ENCODE measurements at regions of chr19 and their contacts with region 1.

Region 1: GRCh38 chr19:54029930-54030490 is 33.7 kb downstream of the VSTM1 start:
- DNase-seq: peak; percentile 70 to 88
- ATAC-seq: peak; percentile 87
- H3K4me3 ChIP-seq: no peak overlapping the region
- H3K27ac ChIP-seq: peak overlapping the region in 1 of 2 experiments; percentile 32; a peak in 2 of 6 replicates
- H3K4me1 ChIP-seq: no peaks in the 10 kb centered on the region
- CTCF ChIP-seq: peak; percentile 91
- EP300 ChIP-seq: no peak
- POLR2A ChIP-seq: no peak
- RAD21 ChIP-seq: peak; percentile 90 to 92

Region 2: DNA sequence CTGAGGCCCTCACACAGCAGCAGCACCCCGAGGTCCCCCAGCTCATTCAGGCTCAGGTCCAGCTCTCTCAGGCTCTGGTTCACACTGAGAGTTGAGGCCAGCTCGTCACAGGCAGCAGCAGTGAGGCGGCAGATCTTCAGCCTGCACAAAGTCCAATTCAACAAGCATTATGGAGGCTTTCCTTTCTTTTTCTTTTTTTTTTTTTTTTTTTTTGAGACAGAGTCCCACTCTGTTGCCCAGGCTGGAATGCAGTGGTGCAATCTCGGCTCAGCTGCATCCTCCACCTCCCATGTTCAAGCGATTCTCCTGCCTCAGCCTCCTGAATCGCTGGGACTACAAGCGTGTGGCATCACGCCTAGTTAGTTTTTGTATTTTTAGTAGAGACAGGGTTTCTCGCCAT is 228.8 kb before region 1 on chr19:
- CTCF ChIA-PET with region 1: interaction called, 148 read pairs
- POLR2A ChIA-PET with region 1: no interaction called
- DNase-seq: no peak
- ATAC-seq: no peak
- H3K4me3 ChIP-seq: no peak overlapping the region
- H3K27ac ChIP-seq: no peak overlapping the region
- H3K4me1 ChIP-seq: no peaks in the 10 kb centered on the region
- CTCF ChIP-seq: no peak
- EP300 ChIP-seq: no peak
- POLR2A ChIP-seq: no peak
- RAD21 ChIP-seq: no peak

Region 3: DNA sequence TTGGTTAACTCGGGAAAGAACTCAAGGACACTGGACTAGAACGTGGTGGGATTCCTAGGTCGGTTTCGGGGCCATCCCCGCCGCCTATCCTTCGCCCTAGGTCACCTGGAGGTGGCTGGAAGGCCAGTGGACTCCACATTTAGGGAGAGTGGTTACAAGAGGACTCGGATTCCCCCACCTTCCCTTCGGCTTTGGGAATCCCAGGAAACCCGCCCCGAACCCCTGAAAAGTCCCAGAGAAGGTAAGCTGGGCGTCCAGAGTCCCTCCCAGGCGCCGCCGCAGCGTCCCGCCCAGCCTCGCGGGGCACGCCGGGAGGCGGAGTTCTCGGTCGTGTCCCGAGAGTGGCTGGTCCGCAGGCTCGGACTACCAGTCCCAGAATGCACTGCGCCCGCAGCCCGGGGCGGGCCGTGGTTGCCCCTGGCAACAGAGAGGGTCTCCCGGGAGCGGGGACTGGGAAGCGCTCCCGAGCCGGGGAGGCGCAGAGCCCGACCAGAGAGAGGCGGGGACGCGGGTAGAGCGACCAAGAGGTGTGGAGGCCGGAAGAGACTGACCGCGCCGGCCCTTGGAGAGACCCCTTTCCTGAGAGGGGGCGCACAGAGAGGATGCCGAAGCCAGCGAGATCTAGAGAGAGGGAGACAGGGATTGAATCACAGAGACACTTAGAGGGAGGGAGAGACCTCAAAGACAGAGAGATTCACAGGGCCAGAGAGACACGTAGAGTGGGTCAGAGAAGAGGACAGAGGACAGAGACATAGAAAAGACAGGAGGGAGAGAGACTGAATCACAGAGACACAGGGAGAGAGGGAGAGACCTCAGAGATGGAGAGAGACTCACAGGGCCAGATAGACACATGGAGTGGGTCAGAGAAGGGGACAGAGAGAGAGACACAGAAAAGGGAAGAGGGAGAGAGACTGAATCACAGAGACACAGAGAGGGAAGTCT is 150.6 kb before region 1 on chr19:
- CTCF ChIA-PET with region 1: interaction called, 88 read pairs
- POLR2A ChIA-PET with region 1: no interaction called
- DNase-seq: peak; percentile 92 to 93
- ATAC-seq: peak; percentile 64 to 78
- H3K4me3 ChIP-seq: peak overlapping the region; percentile 44
- H3K27ac ChIP-seq: peak overlapping the region; percentile 72 to 89
- H3K4me1 ChIP-seq: peaks cover 21% of the 10 kb centered on the region
- CTCF ChIP-seq: no peak
- EP300 ChIP-seq: no peak
- POLR2A ChIP-seq: no peak
- RAD21 ChIP-seq: no peak

Region 4: DNA sequence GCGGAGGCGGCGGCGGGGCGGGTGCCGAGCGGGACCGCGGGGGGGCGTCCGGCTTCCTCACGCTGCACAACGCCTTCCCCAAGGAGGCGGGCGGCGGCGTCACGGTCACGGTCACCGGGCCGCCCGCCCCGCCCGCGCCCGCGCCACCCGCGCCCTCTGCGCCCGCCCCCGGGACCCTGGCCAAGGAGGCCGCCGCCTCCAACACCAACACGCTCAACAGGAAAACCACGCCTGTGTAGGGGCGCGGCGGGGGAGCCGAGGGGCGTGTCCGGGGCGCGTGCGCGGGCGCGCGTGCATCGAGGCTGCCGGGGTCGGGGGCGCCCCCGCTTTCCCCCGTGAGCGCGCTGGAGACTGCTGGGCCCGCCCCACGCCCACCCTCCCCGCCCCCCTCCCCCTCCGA is 47.4 kb before region 1 on chr19:
- CTCF ChIA-PET with region 1: interaction called, 59 read pairs
- POLR2A ChIA-PET with region 1: interaction called, 31 read pairs
- DNase-seq: peak; percentile 64 to 79
- ATAC-seq: no peak
- H3K4me3 ChIP-seq: peak overlapping the region; percentile 69
- H3K27ac ChIP-seq: peak overlapping the region; percentile 84 to 97
- H3K4me1 ChIP-seq: peaks cover 22% of the 10 kb centered on the region
- CTCF ChIP-seq: no peak
- EP300 ChIP-seq: no peak
- POLR2A ChIP-seq: no peak
- RAD21 ChIP-seq: no peak

Region 5: GRCh38 chr19:54041969-54042606 is 12.1 kb after region 1 on chr19:
- CTCF ChIA-PET with region 1: interaction called, 69 read pairs
- POLR2A ChIA-PET with region 1: interaction called, 4 read pairs
- DNase-seq: no peak
- ATAC-seq: peak; percentile 64 to 66; a peak in 5 of 6 replicates
- H3K4me3 ChIP-seq: no peak overlapping the region
- H3K27ac ChIP-seq: peak overlapping the region in 1 of 2 experiments; percentile 42; a peak in 1 of 6 replicates
- H3K4me1 ChIP-seq: peaks cover 10% of the 10 kb centered on the region
- CTCF ChIP-seq: no peak
- EP300 ChIP-seq: no peak
- POLR2A ChIP-seq: no peak
- RAD21 ChIP-seq: no peak